GM10248 (cell line): ENCODE measurements at regions of chr14 and their contacts with region 1.

Region 1: GRCh38 chr14:68834816-68835215 is 41.9 kb upstream of the ZFP36L1 start:
- DNase-seq: no peak
- CTCF ChIP-seq: no peak

Region 2: GRCh38 chr14:68649476-68650189 is 185.2 kb before region 1 on chr14:
- CTCF ChIA-PET with region 1: no interaction called
- POLR2A ChIA-PET with region 1: no interaction called
- DNase-seq: no peak
- CTCF ChIP-seq: no peak

Region 3: DNA sequence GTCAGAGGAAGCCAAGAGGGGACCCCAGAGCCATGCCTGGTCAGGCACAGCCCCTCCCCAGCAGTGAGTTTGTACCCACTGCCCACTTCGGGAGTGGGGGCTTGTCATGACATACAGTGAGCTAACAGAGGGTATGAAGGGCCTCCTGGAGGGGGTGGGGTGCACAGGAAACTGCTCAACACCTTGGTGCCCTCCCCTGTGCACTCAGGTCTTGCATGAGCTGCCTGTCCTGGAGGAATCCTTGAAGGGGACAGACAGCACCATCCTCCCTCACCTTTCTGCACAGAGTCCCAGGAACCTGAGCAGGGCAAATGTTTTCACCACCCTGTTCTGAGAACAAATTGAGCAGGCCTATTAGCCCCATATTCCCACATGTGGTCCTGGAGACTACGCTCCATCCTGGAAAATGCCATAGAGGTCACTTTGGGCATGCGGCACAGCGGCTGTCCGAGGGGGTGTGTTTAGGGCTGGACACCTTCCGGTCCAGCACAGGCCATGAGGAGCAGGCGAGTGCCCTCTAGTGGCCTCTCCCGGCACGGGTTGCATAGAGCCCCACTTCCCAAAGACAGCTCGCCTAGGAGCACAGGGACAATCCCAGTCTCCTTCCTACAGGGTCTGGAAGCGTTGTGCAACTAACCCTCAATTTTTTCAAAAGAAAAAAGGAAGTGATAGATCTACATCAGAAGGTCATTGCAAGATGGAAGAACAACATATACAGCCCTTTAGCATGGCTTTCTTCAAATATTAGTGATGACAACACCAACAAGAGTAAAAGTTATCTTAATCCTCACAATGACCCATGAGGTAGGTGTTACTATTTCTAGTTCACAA is 10.1 kb before region 1 on chr14:
- CTCF ChIA-PET with region 1: interaction called, 73 read pairs
- POLR2A ChIA-PET with region 1: no interaction called
- DNase-seq: peak; percentile 58
- CTCF ChIP-seq: peak; percentile 91